Dendritic cell treated with granulocyte-macrophage colony-stimulating factor and Interleukin-4, amounts not matched to agents 40 ng/mL and 50 ng/mL, for 4 days (primary cell): ENCODE measurements at regions of chr2 and their contacts with region 1.

Region 1: DNA sequence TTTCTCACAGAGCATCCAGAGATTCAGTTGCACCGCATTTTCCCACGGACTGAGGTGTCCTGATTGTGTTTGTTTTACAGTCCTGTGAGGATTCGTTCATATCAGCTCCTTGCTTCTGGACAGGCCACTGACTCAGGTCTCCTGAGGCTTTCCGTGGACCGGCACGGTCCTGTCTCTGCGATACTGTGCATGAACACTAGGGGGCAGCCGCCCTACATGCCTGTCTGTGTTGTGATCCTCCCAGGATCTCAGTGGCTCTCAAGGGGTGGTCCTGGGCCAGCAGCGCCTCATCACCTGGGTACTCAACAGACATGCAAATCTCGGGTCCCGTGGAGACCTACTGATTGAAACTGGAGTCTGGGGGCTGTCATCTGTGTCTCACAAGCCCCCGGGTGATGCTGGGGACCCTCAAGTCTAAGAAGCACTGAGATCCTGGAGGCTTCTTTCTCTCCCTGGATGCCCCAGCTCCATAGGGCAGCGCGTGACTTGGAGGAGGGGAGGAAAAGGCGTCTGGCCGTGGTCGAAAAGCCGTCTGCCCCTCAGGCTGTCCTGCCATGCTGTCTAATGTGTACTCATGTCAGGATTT is 28.9 kb downstream of the IL1R2 start:
- H3K4me3 Mint-ChIP-seq: no peak overlapping the region
- H3K27ac Mint-ChIP-seq: peak overlapping the region; percentile 94
- H3K4me1 Mint-ChIP-seq: peaks cover 51% of the 10 kb centered on the region
- H3K27me3 Mint-ChIP-seq: no peaks in the 10 kb centered on the region

Region 2: GRCh38 chr2:102063941-102064678 is 43.4 kb after region 1 on chr2:
- intact Hi-C with region 1: loop called (anchors 5 kb)
- H3K4me3 Mint-ChIP-seq: peak overlapping the region; percentile 55
- H3K27ac Mint-ChIP-seq: peak overlapping the region; percentile 98
- H3K4me1 Mint-ChIP-seq: peaks cover 91% of the 10 kb centered on the region
- H3K27me3 Mint-ChIP-seq: no peaks in the 10 kb centered on the region

Region 3: DNA sequence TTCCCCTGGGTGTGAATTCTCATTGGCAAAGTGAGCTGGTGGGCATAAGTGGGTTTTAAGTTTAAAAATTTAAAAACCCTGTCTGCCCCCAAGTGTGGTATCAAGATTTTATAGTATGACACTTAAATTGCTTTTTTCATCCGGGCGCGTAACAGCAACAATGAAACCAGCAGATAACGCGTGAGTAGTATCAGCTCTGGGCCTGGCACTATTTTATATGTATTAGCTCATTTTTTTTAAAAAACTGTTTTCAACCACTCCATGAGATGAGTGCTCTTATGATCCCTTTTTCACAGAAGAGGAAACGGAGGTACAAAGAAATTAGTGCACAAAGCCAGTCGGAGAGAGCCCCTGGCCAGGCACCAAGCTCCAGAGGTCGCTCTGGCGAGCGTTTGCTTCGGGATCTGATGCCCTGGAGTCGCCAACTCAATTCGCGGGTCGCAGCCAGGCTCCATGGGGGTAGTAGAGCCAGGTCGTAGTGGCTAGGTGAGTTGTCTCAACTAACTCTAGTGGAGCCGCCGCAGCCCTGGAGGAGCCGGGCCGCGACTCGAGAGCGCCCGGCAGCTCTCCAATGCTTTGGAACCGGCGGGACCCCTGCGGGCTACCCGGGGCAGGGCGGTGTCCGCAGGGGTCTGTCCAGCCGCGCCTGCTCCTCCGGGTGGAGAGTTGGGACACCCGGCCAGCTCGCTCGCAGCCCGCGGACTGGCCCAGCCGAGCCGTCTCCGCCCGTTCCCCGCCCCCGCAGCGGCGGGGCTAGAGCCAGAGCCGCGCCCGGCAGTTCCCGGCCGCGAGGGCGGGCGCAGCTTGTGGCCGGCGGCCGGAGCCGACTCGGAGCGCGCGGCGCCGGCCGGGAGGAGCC is 121.5 kb after region 1 on chr2 and contains the start of gene IL1R1:
- intact Hi-C with region 1: loop called (anchors 5 kb)
- H3K4me3 Mint-ChIP-seq: peak within 1 kb of the TSS; percentile 96
- H3K27ac Mint-ChIP-seq: peak within 1 kb of the TSS; percentile 99
- H3K4me1 Mint-ChIP-seq: peaks cover 55% of the 10 kb centered on the region
- H3K27me3 Mint-ChIP-seq: peaks cover 6% of the 10 kb centered on the region

Region 4: GRCh38 chr2:102166189-102166845 is 145.6 kb after region 1 on chr2:
- intact Hi-C with region 1: loop called (anchors 5 kb)
- H3K4me3 Mint-ChIP-seq: no peak overlapping the region
- H3K27ac Mint-ChIP-seq: no peak overlapping the region
- H3K4me1 Mint-ChIP-seq: peaks cover 12% of the 10 kb centered on the region
- H3K27me3 Mint-ChIP-seq: no peaks in the 10 kb centered on the region

Region 5: DNA sequence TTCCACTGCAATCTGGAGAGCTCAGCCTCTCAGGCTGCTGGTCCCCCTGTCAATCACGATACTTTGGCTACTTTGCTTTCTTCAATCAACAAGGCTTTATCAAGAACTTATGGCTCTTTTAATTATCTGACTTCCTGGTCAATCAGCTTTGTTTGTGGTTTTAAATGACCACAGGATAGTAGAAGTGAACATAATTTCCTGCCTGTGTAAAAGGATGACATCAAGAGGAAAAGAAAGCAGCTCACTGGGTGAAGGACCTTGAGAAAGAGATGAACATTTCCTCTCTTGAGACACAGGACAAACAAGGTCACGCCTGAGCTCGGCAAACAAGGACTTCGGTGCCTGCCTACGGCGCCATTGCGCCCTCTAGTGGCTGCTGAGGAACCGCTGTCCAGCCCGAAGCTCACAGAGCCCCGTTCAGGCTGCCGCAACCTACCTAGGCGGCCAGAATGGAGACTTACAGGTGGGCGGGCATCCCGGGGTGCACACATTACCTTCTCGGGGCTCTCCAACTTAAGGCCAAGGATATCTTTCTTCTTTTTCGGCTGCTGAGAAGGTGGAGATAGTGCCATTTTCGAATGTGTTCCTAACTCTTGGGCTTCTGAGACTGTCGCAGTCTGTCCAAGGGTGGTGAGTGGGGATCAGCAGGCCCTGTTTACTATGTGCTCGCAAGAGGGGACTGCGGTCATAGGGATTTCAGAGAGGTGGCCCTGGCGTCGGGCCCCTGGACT is 220.1 kb after region 1 on chr2:
- intact Hi-C with region 1: loop called (anchors 5 kb)
- H3K4me3 Mint-ChIP-seq: no peak overlapping the region
- H3K27ac Mint-ChIP-seq: peak overlapping the region; percentile 68
- H3K4me1 Mint-ChIP-seq: peaks cover 32% of the 10 kb centered on the region
- H3K27me3 Mint-ChIP-seq: peaks cover 23% of the 10 kb centered on the region

Region 6: GRCh38 chr2:102442967-102443828 is 422.5 kb after region 1 on chr2:
- intact Hi-C with region 1: loop called (anchors 5 kb)
- H3K4me3 Mint-ChIP-seq: no peak overlapping the region
- H3K27ac Mint-ChIP-seq: no peak overlapping the region
- H3K4me1 Mint-ChIP-seq: no peaks in the 10 kb centered on the region
- H3K27me3 Mint-ChIP-seq: peaks cover 6% of the 10 kb centered on the region

Region 7: DNA sequence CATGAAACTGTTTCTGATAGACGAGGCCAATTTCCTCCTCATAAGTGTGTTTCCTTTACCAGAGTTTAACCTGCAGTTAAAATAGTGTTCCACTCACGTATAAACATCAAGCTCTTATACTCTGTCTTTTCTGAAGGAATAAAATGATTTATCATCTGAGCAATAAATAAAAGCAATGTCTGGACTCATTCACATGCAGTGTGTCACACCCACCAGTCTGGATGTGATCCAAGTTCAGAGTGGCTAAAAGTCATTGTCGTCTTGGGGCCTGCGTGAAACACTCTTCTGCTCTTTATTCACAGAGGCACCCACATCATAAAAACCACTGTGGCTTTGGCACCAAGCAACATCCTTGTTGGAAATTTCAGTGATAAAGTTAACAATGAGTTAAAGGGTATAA is 432.8 kb after region 1 on chr2:
- intact Hi-C with region 1: no loop called
- H3K4me3 Mint-ChIP-seq: no peak overlapping the region
- H3K27ac Mint-ChIP-seq: no peak overlapping the region
- H3K4me1 Mint-ChIP-seq: no peaks in the 10 kb centered on the region
- H3K27me3 Mint-ChIP-seq: no peaks in the 10 kb centered on the region